Panc1 (cell line): ENCODE measurements at regions of chr1 and their contacts with region 1.

Region 1: DNA sequence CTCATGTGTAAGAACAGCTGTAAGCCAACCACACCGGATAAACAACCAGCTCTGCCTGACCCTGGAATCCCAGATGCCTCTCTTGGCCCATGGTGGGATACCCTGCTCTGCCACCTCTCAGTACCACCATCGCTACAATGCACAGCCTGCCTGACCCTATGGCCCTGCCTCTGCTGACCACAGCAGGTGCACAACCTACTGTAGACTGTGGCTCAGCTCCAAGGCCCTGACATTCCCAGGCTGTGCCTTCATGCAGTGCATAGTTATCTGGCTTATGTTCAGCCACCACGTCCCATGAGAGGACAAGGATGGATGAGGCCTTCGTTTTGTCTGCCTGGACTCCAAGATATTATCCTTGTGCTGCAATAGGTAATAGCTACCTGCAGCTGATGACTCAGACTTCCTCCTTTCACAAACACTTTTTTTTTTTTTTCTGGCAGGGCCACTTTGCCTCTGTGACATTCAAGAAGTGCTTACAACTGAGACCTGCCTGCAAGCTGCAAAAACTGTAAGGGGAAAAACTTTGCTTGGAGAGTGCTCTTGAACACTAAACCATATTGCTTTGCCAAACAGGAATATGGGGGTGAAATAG is 177.7 kb downstream of the URB2 start:
- DNase-seq: no peak
- ATAC-seq: no peak
- H3K4me3 ChIP-seq: no peak overlapping the region
- H3K27ac ChIP-seq: no peak overlapping the region
- H3K4me1 ChIP-seq: no peaks in the 10 kb centered on the region
- H3K27me3 ChIP-seq: no peaks in the 10 kb centered on the region
- CTCF ChIP-seq: no peak

Region 2: GRCh38 chr1:230354005-230354404 is 550.3 kb after region 1 on chr1:
- CTCF ChIA-PET with region 1: interaction called, 10 read pairs
- POLR2A ChIA-PET with region 1: no interaction called
- in situ Hi-C with region 1: no loop called
- intact Hi-C with region 1: no loop called
- DNase-seq: no peak
- ATAC-seq: no peak
- H3K4me3 ChIP-seq: no peak overlapping the region
- H3K27ac ChIP-seq: no peak overlapping the region
- H3K4me1 ChIP-seq: no peaks in the 10 kb centered on the region
- H3K27me3 ChIP-seq: peaks cover 7% of the 10 kb centered on the region; the same call in 1 of the 2 replicates
- CTCF ChIP-seq: no peak